ENCODE measurements at regions of chr6 and their contacts with region 1.

Region 1: DNA sequence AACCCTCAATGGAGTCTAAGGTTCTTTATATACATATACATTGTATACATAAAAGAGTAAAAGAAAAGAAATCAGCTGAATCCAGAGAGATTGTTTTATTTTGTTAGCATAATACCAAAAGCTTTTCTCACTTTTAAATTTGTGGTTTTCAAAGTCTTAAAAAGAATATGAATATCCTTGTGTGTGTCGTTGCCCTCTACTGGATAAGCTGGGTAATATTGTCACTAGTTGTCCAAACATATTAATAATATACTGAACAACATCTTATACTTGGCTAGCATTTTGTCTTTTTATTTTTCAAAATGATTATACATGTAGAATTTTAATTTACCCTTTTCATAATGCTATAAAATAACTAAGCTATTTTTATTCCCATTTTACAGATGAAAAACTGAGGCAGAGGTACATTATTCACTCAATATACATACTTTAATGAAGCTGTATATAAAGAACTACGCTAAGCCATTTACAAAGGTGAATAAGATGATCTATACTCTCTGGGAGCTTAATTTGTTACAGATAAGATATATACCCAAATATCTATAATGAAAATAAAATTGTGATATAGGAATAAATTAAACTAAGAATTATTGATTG is 531.7 kb downstream of the TFAP2B start:
- DNase-seq: no peak
- ATAC-seq: no peak
- H3K4me3 ChIP-seq: no peak overlapping the region
- H3K4me3 Mint-ChIP-seq: no peak overlapping the region
- H3K27ac ChIP-seq: no peak overlapping the region
- H3K27ac Mint-ChIP-seq: no peak overlapping the region
- H3K4me1 ChIP-seq: no peaks in the 10 kb centered on the region
- H3K4me1 Mint-ChIP-seq: no peaks in the 10 kb centered on the region
- H3K27me3 ChIP-seq: no peaks in the 10 kb centered on the region
- H3K27me3 Mint-ChIP-seq: no peaks in the 10 kb centered on the region
- CTCF ChIP-seq: peak; percentile 20

Region 2: GRCh38 chr6:50816115-50816675 is 534.2 kb before region 1 on chr6:
- CTCF ChIA-PET with region 1: interaction called, 3 read pairs
- POLR2A ChIA-PET with region 1: no interaction called
- intact Hi-C with region 1: loop called (anchors 5 kb)
- DNase-seq: peak; percentile 67
- ATAC-seq: peak; percentile 28
- H3K4me3 ChIP-seq: peak overlapping the region; percentile 40 to 87 (median 53)
- H3K4me3 Mint-ChIP-seq: peak overlapping the region; percentile 88
- H3K27ac ChIP-seq: no peak overlapping the region
- H3K27ac Mint-ChIP-seq: no peak overlapping the region
- H3K4me1 ChIP-seq: peaks cover 8 to 19% of the 10 kb centered on the region in 2 donors
- H3K4me1 Mint-ChIP-seq: peaks cover 18% of the 10 kb centered on the region
- H3K27me3 ChIP-seq: peaks cover 1 to 41% (median 29%) of the 10 kb centered on the region in 4 experiments
- H3K27me3 Mint-ChIP-seq: peaks cover 57% of the 10 kb centered on the region
- CTCF ChIP-seq: peak; percentile 86

Measured in B cell (primary cell).